Activated naive CD4-positive, alpha-beta T cell treated with anti-CD3 and anti-CD28 coated beads for 36 hours (primary cell): ENCODE measurements at regions of chr2 and their contacts with region 1.

Region 1: DNA sequence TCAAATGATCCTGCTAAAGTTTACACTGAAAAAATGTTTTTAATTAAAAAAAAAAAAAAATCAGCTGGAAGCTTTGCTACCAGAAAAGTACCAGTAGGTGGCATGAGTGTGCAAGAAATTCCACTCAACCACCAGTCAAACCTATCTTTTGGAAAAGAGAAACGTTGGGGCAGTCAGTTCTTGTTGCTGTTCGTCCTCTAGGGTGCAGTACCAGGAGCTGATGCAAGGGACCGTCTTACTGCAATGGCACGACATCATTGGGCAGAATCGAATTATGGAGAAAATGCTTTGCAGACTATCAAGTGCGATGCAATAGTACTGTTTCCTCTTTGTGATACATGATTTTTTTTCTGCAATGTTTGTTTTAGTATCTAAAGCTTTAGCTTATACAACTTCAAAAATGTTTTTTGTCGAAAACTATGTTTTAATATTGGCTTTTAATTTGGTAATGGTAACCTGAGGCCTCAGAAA is 18.3 kb downstream of the YPEL5 start:
- DNase-seq: peak; percentile 77
- H3K4me3 Mint-ChIP-seq: no peak overlapping the region
- H3K27ac Mint-ChIP-seq: no peak overlapping the region
- H3K4me1 Mint-ChIP-seq: peaks cover 6% of the 10 kb centered on the region
- H3K27me3 Mint-ChIP-seq: no peaks in the 10 kb centered on the region

Region 2: DNA sequence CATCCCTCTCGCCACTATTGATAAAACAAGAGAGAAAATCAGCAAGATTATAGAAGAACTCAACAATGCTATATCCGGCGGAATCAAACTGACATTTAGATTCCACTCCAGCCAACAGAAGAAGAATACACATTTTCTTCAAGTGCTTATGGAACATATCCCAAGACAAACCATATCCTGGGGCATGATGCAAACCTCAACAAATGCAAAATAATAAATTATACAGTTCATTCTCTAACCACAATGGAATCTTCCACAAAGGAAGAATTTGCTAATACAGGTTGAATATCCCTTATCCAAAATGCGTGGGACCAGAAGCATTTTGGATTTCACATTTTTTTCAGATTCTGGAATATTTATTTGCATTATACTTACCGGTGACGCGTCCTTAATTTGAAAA is 69.7 kb before region 1 on chr2:
- CTCF ChIA-PET with region 1: interaction called, 8 read pairs
- intact Hi-C with region 1: loop called (anchors 1 kb)
- DNase-seq: no peak
- H3K4me3 Mint-ChIP-seq: no peak overlapping the region
- H3K27ac Mint-ChIP-seq: no peak overlapping the region
- H3K4me1 Mint-ChIP-seq: no peaks in the 10 kb centered on the region
- H3K27me3 Mint-ChIP-seq: peaks cover 10% of the 10 kb centered on the region

Region 3: GRCh38 chr2:30106543-30106942 is 58.5 kb before region 1 on chr2:
- CTCF ChIA-PET with region 1: no interaction called
- intact Hi-C with region 1: no loop called
- DNase-seq: no peak
- H3K4me3 Mint-ChIP-seq: no peak overlapping the region
- H3K27ac Mint-ChIP-seq: no peak overlapping the region
- H3K4me1 Mint-ChIP-seq: no peaks in the 10 kb centered on the region
- H3K27me3 Mint-ChIP-seq: no peaks in the 10 kb centered on the region

Region 4: DNA sequence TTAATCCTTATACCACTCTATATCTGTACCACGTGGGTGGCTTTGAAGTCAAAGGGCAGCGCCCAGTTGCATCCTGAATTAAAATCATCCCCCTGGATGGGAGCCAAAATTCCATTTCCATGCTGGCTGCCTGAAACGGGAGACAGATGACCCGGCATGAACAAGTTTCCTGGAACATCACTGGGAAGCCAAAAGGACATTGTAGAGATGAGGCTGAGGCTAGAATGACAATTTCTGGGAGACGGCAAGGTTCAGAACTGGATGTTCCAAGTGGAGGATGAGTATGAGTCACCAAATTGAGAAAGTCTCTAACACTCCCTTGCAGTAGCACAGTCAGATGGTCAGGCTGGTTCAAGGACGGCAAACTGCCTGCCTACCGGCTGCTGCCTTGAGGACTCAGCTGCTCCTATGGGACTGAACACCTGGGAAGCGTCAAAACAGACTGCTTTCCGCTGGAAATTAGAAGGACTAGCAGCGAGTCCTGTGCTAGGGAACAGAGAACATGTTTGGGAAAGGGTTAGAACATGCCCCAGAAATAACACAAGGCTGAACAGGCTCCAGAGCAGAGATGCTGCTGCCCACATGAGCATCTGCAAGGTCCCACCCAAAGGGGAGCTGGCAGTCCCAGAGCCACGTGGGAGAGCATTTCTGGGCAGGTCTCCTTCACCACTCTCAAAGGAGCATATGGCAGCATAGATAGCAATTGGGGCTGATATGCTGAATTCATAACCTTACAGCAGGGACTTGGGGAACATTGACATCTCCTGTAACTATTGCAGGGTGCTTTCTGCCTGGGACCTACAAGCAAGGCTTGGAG is 13.7 kb after region 1 on chr2:
- CTCF ChIA-PET with region 1: interaction called, 15 read pairs
- intact Hi-C with region 1: no loop called
- DNase-seq: no peak
- H3K4me3 Mint-ChIP-seq: no peak overlapping the region
- H3K27ac Mint-ChIP-seq: no peak overlapping the region
- H3K4me1 Mint-ChIP-seq: no peaks in the 10 kb centered on the region
- H3K27me3 Mint-ChIP-seq: no peaks in the 10 kb centered on the region

Region 5: DNA sequence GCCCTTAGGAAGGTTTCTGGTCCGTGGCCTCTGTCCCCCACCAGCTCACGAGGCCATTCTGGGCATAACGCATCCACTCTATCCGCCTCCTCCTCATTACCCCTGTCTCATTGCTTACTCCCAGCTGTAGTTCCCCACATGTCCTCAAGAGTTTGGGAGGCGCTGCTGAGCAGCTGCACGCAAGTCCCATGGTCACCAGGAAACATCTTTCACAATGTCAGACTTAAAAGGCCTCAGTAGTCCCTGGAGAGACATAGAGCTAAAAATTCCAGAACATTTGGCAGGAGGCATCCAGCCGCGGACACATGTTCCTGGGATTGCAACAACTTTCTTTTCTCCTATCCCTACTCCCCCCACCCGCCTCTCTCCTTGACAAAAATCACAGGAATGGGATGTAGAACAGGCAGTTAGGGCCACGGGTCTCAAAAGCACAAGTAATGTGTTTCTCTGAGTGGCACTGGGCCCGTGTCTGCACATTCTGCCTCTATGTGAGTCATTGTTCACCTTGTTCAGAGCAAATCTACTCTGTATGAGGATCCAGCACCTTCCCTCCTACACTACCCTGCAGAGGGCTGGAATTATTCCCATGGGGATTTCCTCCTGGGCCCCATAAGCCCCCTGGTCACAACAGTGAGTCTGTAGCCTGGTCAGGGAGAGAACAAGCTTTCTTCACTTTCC is 74.4 kb after region 1 on chr2:
- CTCF ChIA-PET with region 1: interaction called, 10 read pairs
- intact Hi-C with region 1: no loop called
- DNase-seq: peak; percentile 86
- H3K4me3 Mint-ChIP-seq: peak overlapping the region; percentile 45
- H3K27ac Mint-ChIP-seq: peak overlapping the region; percentile 79
- H3K4me1 Mint-ChIP-seq: peaks cover 93% of the 10 kb centered on the region
- H3K27me3 Mint-ChIP-seq: no peaks in the 10 kb centered on the region

Region 6: DNA sequence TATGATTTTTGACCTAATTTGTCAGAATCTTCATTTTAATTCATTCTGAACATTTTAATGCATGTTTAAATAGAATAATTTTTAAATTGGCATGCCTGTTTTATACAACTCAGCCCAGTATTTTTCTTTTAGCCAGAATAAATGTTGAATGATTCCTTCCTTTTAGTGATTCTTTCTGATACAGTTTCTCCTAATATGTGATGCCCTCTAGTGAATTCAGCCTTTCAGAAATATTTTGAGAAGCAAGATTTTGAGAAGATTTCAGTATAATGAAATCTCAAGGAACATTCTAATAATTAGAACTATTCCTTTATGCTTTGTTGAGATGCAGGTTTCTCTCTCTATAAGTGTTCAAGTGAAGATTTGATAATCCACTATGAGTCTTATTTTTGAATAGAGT is 310.5 kb after region 1 on chr2:
- CTCF ChIA-PET with region 1: interaction called, 10 read pairs
- intact Hi-C with region 1: loop called (anchors 1 kb)
- DNase-seq: no peak
- H3K4me3 Mint-ChIP-seq: no peak overlapping the region
- H3K27ac Mint-ChIP-seq: no peak overlapping the region
- H3K4me1 Mint-ChIP-seq: peaks cover 33% of the 10 kb centered on the region
- H3K27me3 Mint-ChIP-seq: no peaks in the 10 kb centered on the region

Region 7: GRCh38 chr2:31138037-31138962 is 973.2 kb after region 1 on chr2 and contains the start of gene GALNT14:
- CTCF ChIA-PET with region 1: no interaction called
- intact Hi-C with region 1: loop called (anchors 10 kb)
- DNase-seq: peak; percentile 68
- H3K4me3 Mint-ChIP-seq: peak within 1 kb of the TSS; percentile 68
- H3K27ac Mint-ChIP-seq: no peak within 1 kb of the TSS
- H3K4me1 Mint-ChIP-seq: peaks cover 6% of the 10 kb centered on the region
- H3K27me3 Mint-ChIP-seq: peaks cover 51% of the 10 kb centered on the region
- total RNA-seq, gene GALNT14: 1.1 to 1.5 TPM